ENCODE measurements at regions of chr22 and their contacts with region 1.

Region 1: GRCh38 chr22:45984316-45984916 is 7.5 kb upstream of the WNT7B start:
- DNase-seq: no peak

Region 2: GRCh38 chr22:45584121-45584570 is 400.3 kb before region 1 on chr22:
- in situ Hi-C with region 1: loop called (anchors 10 kb)
- DNase-seq: no peak

Region 3: GRCh38 chr22:45645526-45646414 is 338.6 kb before region 1 on chr22:
- in situ Hi-C with region 1: loop called (anchors 10 kb)
- DNase-seq: peak; percentile 78